ENCODE measurements at regions of chr17 and their contacts with region 1.

Region 1: GRCh38 chr17:7856883-7857723 is at the start of gene NAA38:
- DNase-seq: peak; percentile 97 to 98 (median 98)
- ATAC-seq: peak; percentile 88 to 91
- H3K4me3 ChIP-seq: peak within 1 kb of the TSS; percentile 43
- H3K27ac ChIP-seq: peak within 1 kb of the TSS; percentile 89
- H3K4me1 ChIP-seq: peaks cover 6% of the 10 kb centered on the region
- H3K27me3 ChIP-seq: no peaks in the 10 kb centered on the region
- total RNA-seq, gene NAA38: 59.9 to 103 (median 95.6) TPM

Region 2: DNA sequence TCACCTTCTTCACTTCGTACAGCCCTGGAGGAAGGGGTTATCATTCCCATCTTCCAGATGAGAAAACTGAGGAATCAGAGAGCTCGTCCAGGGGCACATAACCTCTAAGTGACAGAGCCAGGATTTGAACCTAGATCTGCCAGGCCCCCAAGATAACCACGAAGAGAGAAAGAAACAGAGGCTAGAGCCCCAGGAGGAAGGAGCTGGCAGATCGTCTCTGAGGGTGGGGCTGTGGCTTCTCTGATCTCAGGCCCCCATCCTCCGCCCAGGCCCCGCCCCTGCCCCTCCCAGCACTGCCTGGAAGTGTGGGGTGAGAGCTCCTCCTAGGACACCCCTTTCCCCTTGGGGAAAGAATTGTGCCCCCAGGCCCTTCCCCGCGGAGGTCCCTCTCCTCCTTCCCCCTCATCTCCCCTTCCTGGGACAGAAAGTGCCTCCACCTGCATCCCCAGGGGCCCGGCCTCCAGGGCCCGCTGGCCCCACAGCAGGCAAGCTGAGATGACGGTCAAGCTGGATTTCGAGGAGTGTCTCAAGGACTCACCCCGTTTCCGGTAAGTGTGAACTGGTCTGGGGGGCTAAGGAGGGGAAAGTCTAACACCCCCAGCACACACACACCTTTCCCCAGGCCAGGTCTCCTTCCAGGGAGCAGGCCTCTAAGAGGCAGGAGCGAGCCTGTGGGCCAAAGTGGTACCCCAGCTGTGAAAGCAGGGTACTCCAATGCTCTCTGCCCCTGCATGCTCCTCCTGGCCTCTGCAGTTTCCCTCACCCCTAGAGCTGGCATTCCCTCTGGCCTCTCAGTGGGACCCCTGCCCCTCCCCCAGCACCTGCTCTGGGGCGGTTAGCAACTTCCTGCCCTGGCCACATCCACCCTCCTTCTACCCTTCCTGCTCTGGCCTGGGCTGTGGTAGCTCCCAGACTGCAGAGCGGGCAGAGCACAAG is 520.6 kb before region 1 on chr17 and contains the start of gene ACAP1:
- intact Hi-C with region 1: no loop called
- DNase-seq: peak in 2 of 3 donors; percentile 75 to 83
- ATAC-seq: peak; percentile 33 to 54
- H3K4me3 ChIP-seq: no peak within 1 kb of the TSS
- H3K27ac ChIP-seq: no peak within 1 kb of the TSS
- H3K4me1 ChIP-seq: no peaks in the 10 kb centered on the region
- H3K27me3 ChIP-seq: no peaks in the 10 kb centered on the region
- total RNA-seq, gene ACAP1: 15.0 to 26.4 (median 20.8) TPM

Region 3: GRCh38 chr17:7614422-7615264 is 242.5 kb before region 1 on chr17 and contains the start of gene FXR2:
- intact Hi-C with region 1: no loop called
- DNase-seq: peak; percentile 100
- ATAC-seq: peak; percentile 99
- H3K4me3 ChIP-seq: peak within 1 kb of the TSS; percentile 66
- H3K27ac ChIP-seq: peak within 1 kb of the TSS; percentile 86
- H3K4me1 ChIP-seq: peaks cover 3% of the 10 kb centered on the region
- H3K27me3 ChIP-seq: no peaks in the 10 kb centered on the region
- total RNA-seq, gene FXR2: 78.9 to 109 (median 87.2) TPM

Region 4: GRCh38 chr17:7745748-7746470 is 111.2 kb before region 1 on chr17:
- intact Hi-C with region 1: loop called in 1 of 4 experiments (anchors 10 kb)
- DNase-seq: no peak
- ATAC-seq: peak in 1 of 2 donors; percentile 49
- H3K4me3 ChIP-seq: no peak overlapping the region
- H3K27ac ChIP-seq: no peak overlapping the region
- H3K4me1 ChIP-seq: peaks cover 5% of the 10 kb centered on the region
- H3K27me3 ChIP-seq: no peaks in the 10 kb centered on the region

Region 5: DNA sequence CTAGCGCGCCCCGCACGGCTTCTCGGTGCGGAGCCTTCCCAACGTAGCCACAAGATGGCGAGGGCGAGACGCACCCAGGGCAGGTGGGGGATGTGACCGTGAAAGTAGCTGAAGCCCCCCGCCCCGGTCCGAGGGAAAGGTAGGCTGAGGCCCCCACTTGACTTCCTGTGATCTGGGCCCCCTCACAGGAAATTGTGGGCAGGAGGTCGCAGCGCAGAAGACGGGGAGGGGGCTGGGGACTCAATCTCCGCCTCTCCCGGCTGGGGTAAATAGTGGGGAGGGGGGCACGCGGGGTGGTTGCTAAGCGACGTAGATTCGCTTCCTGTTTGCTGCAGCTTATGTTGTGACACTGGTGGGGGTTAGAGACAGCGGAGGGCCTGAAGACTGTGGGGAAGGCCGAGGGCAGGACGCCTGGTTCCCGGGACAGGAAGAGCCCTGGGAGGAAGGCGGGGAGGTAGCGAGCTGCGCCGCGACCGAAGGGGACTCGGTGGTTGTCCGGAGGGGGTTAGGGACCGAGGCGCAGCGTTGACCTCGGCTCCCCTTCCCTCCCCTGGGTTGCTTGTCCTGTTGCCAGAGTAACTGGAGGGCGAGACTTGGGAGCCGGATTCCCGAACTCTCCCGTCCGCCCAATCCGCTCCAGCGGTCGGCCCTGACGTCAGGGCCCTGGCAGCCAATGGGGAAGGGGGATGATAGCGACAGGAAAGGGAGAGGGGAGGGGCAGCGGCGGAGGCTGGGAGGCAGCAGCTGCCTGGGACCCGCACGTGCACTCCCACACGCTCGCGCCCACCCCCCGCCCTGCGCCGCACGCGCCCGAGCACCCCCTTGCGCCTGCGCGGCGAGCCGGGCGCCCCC is 21.9 kb before region 1 on chr17:
- intact Hi-C with region 1: loop called in 1 of 4 experiments (anchors 2 kb)
- DNase-seq: peak; percentile 97 to 99 (median 99)
- ATAC-seq: peak; percentile 81 to 83
- H3K4me3 ChIP-seq: peak overlapping the region; percentile 94
- H3K27ac ChIP-seq: peak overlapping the region; percentile 100
- H3K4me1 ChIP-seq: peaks cover 7% of the 10 kb centered on the region
- H3K27me3 ChIP-seq: no peaks in the 10 kb centered on the region

Measured in right cardiac atrium (tissue), 5 donors.